HepG2 (cell line): ENCODE measurements at regions of chr22 and their contacts with region 1.

Region 1: GRCh38 chr22:18077639-18078328 is at the start of gene PEX26:
- DNase-seq: peak; percentile 92
- ATAC-seq: peak; percentile 98
- H3K4me3 ChIP-seq: peak within 1 kb of the TSS; percentile 78 to 94 (median 80)
- H3K27ac ChIP-seq: peak within 1 kb of the TSS; percentile 72
- H3K4me1 ChIP-seq: peaks cover 32% of the 10 kb centered on the region
- H3K27me3 ChIP-seq: no peaks in the 10 kb centered on the region; a peak in 1 of 5 replicates
- CTCF ChIP-seq: no peak
- EP300 ChIP-seq: no peak
- POLR2A ChIP-seq: peak; percentile 62 to 73
- RAD21 ChIP-seq: no peak
- total RNA-seq, gene PEX26: 25.1 and 30.6 TPM in 2 replicates

Region 2: DNA sequence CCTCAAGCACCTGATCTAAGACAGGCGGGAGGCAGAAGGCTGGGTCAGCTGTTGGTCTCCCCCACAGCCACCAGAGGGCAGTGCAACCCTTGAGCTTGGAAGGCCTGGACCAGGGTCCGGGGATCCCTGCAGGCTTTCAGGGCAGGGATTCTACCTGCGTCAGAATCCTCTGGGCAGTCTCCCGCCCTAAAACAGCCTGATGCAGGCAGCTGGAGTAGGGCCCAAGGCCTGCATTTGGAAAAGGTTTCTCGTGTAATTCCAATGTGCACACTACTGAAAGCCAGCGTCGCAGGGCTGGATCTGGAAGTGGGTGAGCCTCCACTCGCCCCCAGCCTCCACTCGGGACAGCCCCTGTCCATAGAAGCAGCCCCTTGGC is 335.3 kb before region 1 on chr22:
- CTCF ChIA-PET with region 1: no interaction called
- POLR2A ChIA-PET with region 1: no interaction called
- in situ Hi-C with region 1: no loop called
- intact Hi-C with region 1: loop called (anchors 2 kb)
- DNase-seq: peak; percentile 63
- ATAC-seq: peak; percentile 93
- H3K4me3 ChIP-seq: no peak overlapping the region
- H3K27ac ChIP-seq: no peak overlapping the region
- H3K4me1 ChIP-seq: no peaks in the 10 kb centered on the region
- H3K27me3 ChIP-seq: no peaks in the 10 kb centered on the region
- CTCF ChIP-seq: peak; percentile 90
- EP300 ChIP-seq: no peak
- POLR2A ChIP-seq: no peak
- RAD21 ChIP-seq: peak; percentile 91

Region 3: GRCh38 chr22:17884084-17884483 is 193.7 kb before region 1 on chr22:
- CTCF ChIA-PET with region 1: no interaction called
- POLR2A ChIA-PET with region 1: no interaction called
- in situ Hi-C with region 1: no loop called
- intact Hi-C with region 1: no loop called
- DNase-seq: no peak
- ATAC-seq: no peak
- H3K4me3 ChIP-seq: no peak overlapping the region
- H3K27ac ChIP-seq: no peak overlapping the region
- H3K4me1 ChIP-seq: no peaks in the 10 kb centered on the region
- H3K27me3 ChIP-seq: no peaks in the 10 kb centered on the region
- CTCF ChIP-seq: no peak
- EP300 ChIP-seq: no peak
- POLR2A ChIP-seq: no peak
- RAD21 ChIP-seq: no peak

Region 4: GRCh38 chr22:17897426-17897825 is 180.4 kb before region 1 on chr22:
- CTCF ChIA-PET with region 1: no interaction called
- POLR2A ChIA-PET with region 1: no interaction called
- in situ Hi-C with region 1: no loop called
- intact Hi-C with region 1: loop called (anchors 2 kb)
- DNase-seq: peak; percentile 16
- ATAC-seq: no peak
- H3K4me3 ChIP-seq: no peak overlapping the region
- H3K27ac ChIP-seq: no peak overlapping the region
- H3K4me1 ChIP-seq: peaks cover 50% of the 10 kb centered on the region
- H3K27me3 ChIP-seq: no peaks in the 10 kb centered on the region
- CTCF ChIP-seq: no peak
- EP300 ChIP-seq: no peak
- POLR2A ChIP-seq: no peak
- RAD21 ChIP-seq: no peak

Region 5: GRCh38 chr22:17964643-17965042 is 113.1 kb before region 1 on chr22:
- CTCF ChIA-PET with region 1: no interaction called
- POLR2A ChIA-PET with region 1: no interaction called
- in situ Hi-C with region 1: no loop called
- intact Hi-C with region 1: no loop called
- DNase-seq: no peak
- ATAC-seq: no peak
- H3K4me3 ChIP-seq: no peak overlapping the region
- H3K27ac ChIP-seq: no peak overlapping the region
- H3K4me1 ChIP-seq: peaks cover 34% of the 10 kb centered on the region
- H3K27me3 ChIP-seq: no peaks in the 10 kb centered on the region
- CTCF ChIP-seq: no peak
- EP300 ChIP-seq: no peak
- POLR2A ChIP-seq: no peak
- RAD21 ChIP-seq: no peak

Region 6: GRCh38 chr22:18001040-18001893 is 76.5 kb before region 1 on chr22:
- CTCF ChIA-PET with region 1: interaction called, 10 read pairs
- POLR2A ChIA-PET with region 1: interaction called, 15 read pairs
- in situ Hi-C with region 1: loop called (anchors 5 kb)
- intact Hi-C with region 1: loop called (anchors 1 kb)
- DNase-seq: peak; percentile 97
- ATAC-seq: peak; percentile 94
- H3K4me3 ChIP-seq: peak overlapping the region; percentile 84 to 92 (median 86)
- H3K27ac ChIP-seq: peak overlapping the region; percentile 98
- H3K4me1 ChIP-seq: peaks cover 18% of the 10 kb centered on the region
- H3K27me3 ChIP-seq: no peaks in the 10 kb centered on the region
- CTCF ChIP-seq: peak; percentile 62
- EP300 ChIP-seq: no peak
- POLR2A ChIP-seq: peak; percentile 72 to 88
- RAD21 ChIP-seq: peak; percentile 94

Region 7: GRCh38 chr22:18035740-18036139 is 42.0 kb before region 1 on chr22:
- CTCF ChIA-PET with region 1: no interaction called
- POLR2A ChIA-PET with region 1: interaction called, 6 read pairs
- in situ Hi-C with region 1: no loop called
- intact Hi-C with region 1: loop called (anchors 2 kb)
- DNase-seq: peak; percentile 82
- ATAC-seq: peak; percentile 87
- H3K4me3 ChIP-seq: 0 out of 6 replicates have a peak overlapping the region, but pooled peaks of 1 of the 3 experiments have one; percentile 39
- H3K27ac ChIP-seq: no peak overlapping the region
- H3K4me1 ChIP-seq: peaks cover 47% of the 10 kb centered on the region
- H3K27me3 ChIP-seq: peaks cover 0 to 8% of the 10 kb centered on the region in 2 experiments; a peak in 1 of 5 replicates
- CTCF ChIP-seq: no peak
- EP300 ChIP-seq: no peak
- POLR2A ChIP-seq: no peak
- RAD21 ChIP-seq: no peak

Region 8: DNA sequence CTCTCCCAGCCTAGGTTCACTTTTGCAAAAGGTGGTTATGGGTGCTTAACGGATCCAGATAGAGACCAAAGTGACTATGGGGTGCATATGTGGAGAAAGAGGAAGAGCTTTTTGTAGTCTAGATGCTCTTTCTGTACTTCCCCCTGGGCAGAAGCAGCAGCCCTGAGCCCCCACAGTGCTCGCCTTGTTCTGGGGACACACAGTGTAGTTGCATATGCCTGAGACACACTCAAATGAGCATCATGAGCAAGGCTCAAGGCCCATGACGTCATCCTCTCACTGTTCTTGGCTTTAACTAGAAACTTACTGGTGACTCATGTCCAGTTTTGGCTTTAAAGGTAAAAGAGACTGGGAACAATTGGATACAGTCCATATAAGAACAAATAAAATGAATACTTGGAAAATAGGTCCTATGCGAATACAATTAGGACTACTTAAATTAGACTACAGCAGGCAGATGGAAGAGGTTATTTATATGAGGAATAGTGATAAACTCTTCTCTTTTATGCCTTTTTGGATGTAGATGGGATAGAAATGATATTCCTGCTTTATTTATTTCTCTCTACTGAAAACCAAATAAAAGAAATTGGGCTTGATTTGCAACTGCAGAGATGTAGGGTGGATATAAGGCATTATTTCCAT is 20.1 kb before region 1 on chr22:
- CTCF ChIA-PET with region 1: no interaction called
- POLR2A ChIA-PET with region 1: interaction called, 18 read pairs
- in situ Hi-C with region 1: no loop called
- intact Hi-C with region 1: no loop called
- DNase-seq: peak; percentile 63
- ATAC-seq: no peak
- H3K4me3 ChIP-seq: no peak overlapping the region
- H3K27ac ChIP-seq: no peak overlapping the region
- H3K4me1 ChIP-seq: peaks cover 85% of the 10 kb centered on the region
- H3K27me3 ChIP-seq: no peaks in the 10 kb centered on the region
- CTCF ChIP-seq: no peak
- EP300 ChIP-seq: no peak
- POLR2A ChIP-seq: no peak
- RAD21 ChIP-seq: no peak

Region 9: DNA sequence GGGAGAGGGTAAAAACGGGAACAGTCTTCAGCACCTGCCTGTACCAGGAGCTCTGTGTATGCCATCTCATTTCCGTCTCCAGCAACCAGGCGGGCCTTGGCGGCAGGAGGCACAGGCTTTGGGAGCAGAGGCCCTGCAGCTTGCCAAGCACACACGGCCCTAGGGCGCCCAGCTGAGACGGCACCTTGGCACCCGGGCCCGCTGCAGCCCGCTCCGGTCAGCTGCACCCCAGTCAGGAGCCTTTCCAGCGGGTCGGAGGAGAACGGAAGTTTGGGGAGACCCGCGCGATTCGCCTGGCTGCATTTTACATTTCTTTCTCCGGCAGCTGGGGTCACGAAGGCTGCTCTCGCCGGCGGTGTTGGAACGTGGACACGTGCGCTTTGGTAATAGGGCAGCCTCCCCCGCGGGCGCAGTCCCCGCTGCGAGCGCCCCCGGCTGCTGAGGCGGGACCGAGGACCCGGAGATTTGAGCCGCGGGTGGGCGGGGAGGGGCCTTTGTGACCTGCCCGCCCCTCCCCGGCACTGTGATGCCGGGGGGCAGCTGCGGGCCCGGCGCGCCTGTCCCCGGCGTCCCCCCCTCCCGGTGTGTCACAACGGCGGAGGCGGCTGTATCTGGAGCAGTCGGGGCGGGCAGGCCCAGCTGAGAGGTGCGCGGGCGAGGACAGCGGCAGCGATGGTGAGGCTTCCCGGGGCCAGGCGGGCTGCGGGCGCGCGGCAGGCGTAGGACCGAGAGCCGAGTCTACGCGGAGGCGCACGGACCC is 32.6 kb after region 1 on chr22 and contains the start of gene TUBA8:
- CTCF ChIA-PET with region 1: no interaction called
- POLR2A ChIA-PET with region 1: no interaction called
- in situ Hi-C with region 1: no loop called
- intact Hi-C with region 1: no loop called
- DNase-seq: no peak
- ATAC-seq: peak; percentile 85
- H3K4me3 ChIP-seq: peak within 1 kb of the TSS; percentile 38 to 71 (median 42)
- H3K27ac ChIP-seq: no peak within 1 kb of the TSS
- H3K4me1 ChIP-seq: peaks cover 23% of the 10 kb centered on the region
- H3K27me3 ChIP-seq: peaks cover 8 to 38% of the 10 kb centered on the region in 2 experiments
- CTCF ChIP-seq: no peak; the same call in 1 of the 2 replicates
- EP300 ChIP-seq: no peak
- POLR2A ChIP-seq: no peak
- RAD21 ChIP-seq: no peak
- total RNA-seq, gene TUBA8: 0.17 and 0.35 TPM in 2 replicates

Region 10: DNA sequence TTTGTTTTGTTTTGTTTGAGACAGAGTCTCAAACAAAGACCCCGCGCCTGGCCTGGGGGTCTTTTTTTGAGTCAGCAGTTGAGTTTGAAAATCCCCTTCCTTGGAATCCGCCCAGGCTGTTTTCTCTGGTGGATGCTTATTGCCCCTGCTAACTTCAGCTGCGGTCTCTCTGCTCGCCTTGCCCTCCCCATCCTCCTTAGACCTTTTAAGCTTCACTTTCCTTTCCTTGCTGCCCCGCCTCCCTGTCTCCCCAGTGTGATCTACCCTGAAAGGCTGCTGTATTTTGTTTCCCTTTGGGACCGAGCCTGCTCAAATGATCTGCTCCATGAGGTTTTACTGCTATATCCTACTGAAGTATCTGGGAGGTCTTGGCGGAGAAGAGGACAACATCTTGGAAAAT is 74.7 kb after region 1 on chr22:
- CTCF ChIA-PET with region 1: no interaction called
- POLR2A ChIA-PET with region 1: interaction called, 19 read pairs
- in situ Hi-C with region 1: no loop called
- intact Hi-C with region 1: no loop called
- DNase-seq: no peak
- ATAC-seq: no peak
- H3K4me3 ChIP-seq: no peak overlapping the region
- H3K27ac ChIP-seq: no peak overlapping the region
- H3K4me1 ChIP-seq: peaks cover 33% of the 10 kb centered on the region
- H3K27me3 ChIP-seq: no peaks in the 10 kb centered on the region
- CTCF ChIP-seq: no peak
- EP300 ChIP-seq: no peak
- POLR2A ChIP-seq: no peak
- RAD21 ChIP-seq: no peak